Sciatic nerve (tissue), 2 donors: ENCODE measurements at regions of chr9 and their contacts with region 1.

Region 1: GRCh38 chr9:32918628-32919027 is 82.8 kb downstream of the APTX start:
- DNase-seq: no peak
- ATAC-seq: no peak

Region 2: DNA sequence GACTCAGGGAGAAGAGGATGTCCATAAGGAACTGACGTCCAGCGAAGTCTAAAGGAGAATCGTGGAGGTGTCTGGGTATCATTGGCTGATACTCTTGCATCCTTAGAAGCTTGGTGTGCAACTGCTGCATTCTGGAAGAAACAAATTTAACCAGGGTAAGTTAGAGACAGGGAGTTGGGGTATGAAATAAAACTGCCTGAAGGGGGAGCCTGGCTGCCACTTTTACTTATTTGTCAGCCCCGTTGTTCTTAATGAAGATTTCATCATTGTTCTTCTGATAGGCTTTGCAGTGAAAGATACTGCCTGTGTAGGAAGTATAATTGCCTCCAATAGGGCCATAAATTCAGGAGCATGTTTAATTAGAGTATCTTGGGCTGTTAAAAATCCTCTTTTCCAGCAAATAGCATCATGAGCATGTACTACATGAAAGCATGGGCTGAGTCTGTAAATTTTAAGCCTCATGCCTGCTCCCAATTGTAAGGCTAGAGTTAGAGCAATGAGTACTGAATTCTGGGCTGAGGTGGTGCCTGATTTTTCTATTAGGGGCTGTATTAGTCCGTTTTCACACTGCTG is 1798.7 kb before region 1 on chr9:
- intact Hi-C with region 1: loop called (anchors 10 kb)
- DNase-seq: no peak
- ATAC-seq: no peak

Region 3: GRCh38 chr9:32723789-32724325 is 194.8 kb before region 1 on chr9:
- intact Hi-C with region 1: no loop called
- DNase-seq: no peak
- ATAC-seq: peak; percentile 65